Heart left ventricle (tissue), 16 donors: ENCODE measurements at regions of chr6 and their contacts with region 1.

Region 1: GRCh38 chr6:79630883-79631692 is at the start of gene SH3BGRL2:
- DNase-seq: peak; percentile 66 to 84 (median 74)
- ATAC-seq: peak; percentile 88 to 97 (median 96)
- H3K4me3 ChIP-seq: peak within 1 kb of the TSS; percentile 53 to 97 (median 84)
- H3K27ac ChIP-seq: peak within 1 kb of the TSS in 10 of 12 donors; percentile 35 to 86 (median 74)
- H3K4me1 ChIP-seq: peaks cover 0 to 26% (median 6%) of the 10 kb centered on the region in 12 donors
- H3K27me3 ChIP-seq: peaks cover 0 to 16% (median 0%) of the 10 kb centered on the region in 9 donors
- CTCF ChIP-seq: no peak
- POLR2A ChIP-seq: peak in 1 of 2 donors; percentile 49
- total RNA-seq, gene SH3BGRL2: 4.4 to 14.1 (median 5.6) TPM

Region 2: GRCh38 chr6:79548304-79548703 is 82.8 kb before region 1 on chr6:
- intact Hi-C with region 1: no loop called
- DNase-seq: no peak
- ATAC-seq: no peak
- H3K4me3 ChIP-seq: no peak overlapping the region
- H3K27ac ChIP-seq: no peak overlapping the region
- H3K4me1 ChIP-seq: peaks cover 0 to 27% (median 19%) of the 10 kb centered on the region in 12 donors
- H3K27me3 ChIP-seq: no peaks in the 10 kb centered on the region
- CTCF ChIP-seq: no peak
- POLR2A ChIP-seq: no peak

Region 3: GRCh38 chr6:79672631-79673111 is 41.6 kb after region 1 on chr6:
- intact Hi-C with region 1: loop called in 2 of 10 experiments (anchors 5 kb)
- DNase-seq: no peak
- ATAC-seq: no peak
- H3K4me3 ChIP-seq: no peak overlapping the region
- H3K27ac ChIP-seq: peak overlapping the region in 3 of 12 donors; percentile 21 to 55 (median 25)
- H3K4me1 ChIP-seq: peaks cover 0 to 21% (median 8%) of the 10 kb centered on the region in 12 donors
- H3K27me3 ChIP-seq: no peaks in the 10 kb centered on the region
- CTCF ChIP-seq: peak; percentile 6 to 61 (median 41)
- POLR2A ChIP-seq: no peak

Region 4: DNA sequence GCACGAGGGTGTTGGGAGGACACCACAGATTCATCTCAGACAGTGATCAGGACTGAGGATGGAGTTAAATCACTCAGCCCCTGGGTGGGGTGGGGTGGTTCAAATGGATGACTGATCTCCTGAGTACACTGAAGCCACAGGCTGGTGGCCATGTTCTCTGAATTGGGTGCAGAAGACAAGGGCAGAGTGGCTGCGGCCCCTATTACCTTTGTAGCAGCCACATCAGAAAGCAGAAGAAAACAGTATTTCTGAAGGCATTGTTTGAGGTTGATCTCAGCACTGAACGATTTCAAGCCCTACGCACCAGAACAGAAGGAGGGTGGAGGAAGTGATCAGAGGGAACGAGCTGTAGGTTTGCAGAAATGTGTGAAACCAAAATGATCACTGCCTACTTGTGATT is 71.6 kb after region 1 on chr6:
- intact Hi-C with region 1: no loop called
- DNase-seq: no peak
- ATAC-seq: no peak
- H3K4me3 ChIP-seq: no peak overlapping the region
- H3K27ac ChIP-seq: no peak overlapping the region
- H3K4me1 ChIP-seq: peaks cover 0 to 9% (median 0%) of the 10 kb centered on the region in 12 donors
- H3K27me3 ChIP-seq: no peaks in the 10 kb centered on the region
- CTCF ChIP-seq: no peak
- POLR2A ChIP-seq: no peak

Region 5: GRCh38 chr6:79861023-79861422 is 229.9 kb after region 1 on chr6:
- intact Hi-C with region 1: no loop called
- DNase-seq: no peak
- ATAC-seq: no peak
- H3K4me3 ChIP-seq: no peak overlapping the region
- H3K27ac ChIP-seq: no peak overlapping the region
- H3K4me1 ChIP-seq: no peaks in the 10 kb centered on the region
- H3K27me3 ChIP-seq: no peaks in the 10 kb centered on the region
- CTCF ChIP-seq: no peak
- POLR2A ChIP-seq: no peak